Dorsolateral prefrontal cortex (tissue), 120 donors: ENCODE measurements at regions of chr2 and their contacts with region 1.

Region 1: GRCh38 chr2:138090330-138090729 is 126.1 kb downstream of the HNMT start:
- DNase-seq: no peak
- H3K4me3 ChIP-seq: no peak overlapping the region
- H3K27ac ChIP-seq: no peak overlapping the region
- H3K27me3 ChIP-seq: no peaks in the 10 kb centered on the region
- CTCF ChIP-seq: peak in 53 of 56 donors; percentile 29 to 79 (median 61)

Region 2: DNA sequence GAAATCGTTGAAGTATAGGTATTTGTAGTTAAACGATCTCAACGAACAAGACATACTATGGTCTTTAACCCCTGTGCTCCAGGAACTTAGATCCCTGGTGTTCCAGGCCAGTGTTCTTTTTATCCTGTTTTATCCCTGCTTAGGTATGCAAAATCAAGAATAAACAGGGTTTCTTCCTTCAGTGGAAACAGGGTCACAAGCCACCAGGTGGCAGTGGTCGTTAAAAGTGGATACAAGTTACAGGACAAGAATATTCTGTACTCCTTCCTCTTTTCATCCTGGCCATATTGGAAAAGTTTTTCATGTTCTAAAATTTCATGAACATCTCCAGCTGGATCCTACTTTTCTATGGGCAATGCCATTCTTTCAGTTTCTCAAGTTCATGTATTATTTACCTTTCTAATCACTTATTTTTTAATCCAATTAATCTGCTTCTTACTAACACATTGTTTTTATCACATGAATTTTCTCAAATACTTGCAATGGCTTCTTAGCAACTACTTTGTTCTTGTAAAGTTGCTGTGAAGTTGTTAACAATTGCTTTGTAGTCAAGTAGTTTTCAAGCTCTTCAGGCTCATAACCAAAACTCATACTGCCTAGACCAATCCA is 142.5 kb before region 1 on chr2:
- intact Hi-C with region 1: loop called (anchors 2 to 5 kb)
- DNase-seq: peak in 9 of 10 donors; percentile 43 to 86 (median 56)
- H3K4me3 ChIP-seq: no peak overlapping the region
- H3K27ac ChIP-seq: no peak overlapping the region
- H3K27me3 ChIP-seq: no peaks in the 10 kb centered on the region
- CTCF ChIP-seq: peak; percentile 42 to 88 (median 74)

Region 3: GRCh38 chr2:138115666-138116065 is 25.3 kb after region 1 on chr2:
- intact Hi-C with region 1: no loop called
- DNase-seq: no peak
- H3K4me3 ChIP-seq: no peak overlapping the region
- H3K27ac ChIP-seq: no peak overlapping the region
- H3K27me3 ChIP-seq: no peaks in the 10 kb centered on the region
- CTCF ChIP-seq: no peak

Region 4: DNA sequence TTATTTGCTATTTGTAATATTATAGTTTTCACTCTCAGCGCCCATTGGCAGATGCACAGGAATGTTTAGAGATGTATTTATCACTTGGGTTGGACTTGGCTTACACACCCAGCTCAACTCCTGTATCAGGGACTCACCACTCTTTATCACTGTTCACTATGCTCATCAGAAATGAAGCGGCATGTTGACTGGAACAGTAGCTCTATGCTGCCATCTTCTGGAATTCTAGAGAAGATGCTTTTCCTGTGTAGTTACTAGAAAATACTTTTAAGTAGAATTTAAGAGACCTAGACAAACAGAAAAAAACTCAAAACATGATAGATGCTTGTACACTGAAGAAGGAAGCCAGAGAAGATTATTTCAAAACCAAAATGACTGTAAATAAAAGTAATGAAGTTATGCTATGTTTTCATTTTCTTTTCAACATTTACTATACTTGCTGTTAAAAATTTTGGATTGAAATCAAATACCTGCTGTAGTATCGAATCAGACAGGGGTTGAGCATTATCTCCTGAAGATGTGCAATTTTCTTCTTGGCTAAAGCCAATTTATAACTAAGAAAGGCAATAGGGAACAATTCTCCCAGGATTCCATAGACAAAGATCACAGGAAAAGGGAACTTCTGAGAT is 737.2 kb after region 1 on chr2:
- intact Hi-C with region 1: loop called in 1 of 2 experiments (anchors 10 kb)
- DNase-seq: peak in 1 of 10 donors; percentile 25
- H3K4me3 ChIP-seq: no peak overlapping the region
- H3K27ac ChIP-seq: no peak overlapping the region
- H3K27me3 ChIP-seq: peaks cover 0 to 6% (median 0%) of the 10 kb centered on the region in 45 donors
- CTCF ChIP-seq: peak; percentile 55 to 94 (median 80)